ENCODE measurements at regions of chr17 and their contacts with region 1.

Region 1: GRCh38 chr17:61412143-61412859 is 12.7 kb downstream of the TBX2 start:
- DNase-seq: peak; percentile 72
- H3K4me3 Mint-ChIP-seq: peak overlapping the region; percentile 71
- H3K27ac Mint-ChIP-seq: peak overlapping the region; percentile 19
- H3K4me1 Mint-ChIP-seq: no peaks in the 10 kb centered on the region
- H3K27me3 Mint-ChIP-seq: no peaks in the 10 kb centered on the region
- CTCF ChIP-seq: peak; percentile 99

Region 2: GRCh38 chr17:61002316-61002736 is 410.0 kb before region 1 on chr17:
- CTCF ChIA-PET with region 1: interaction called, 5 read pairs
- POLR2A ChIA-PET with region 1: no interaction called
- intact Hi-C with region 1: loop called (anchors 1 kb)
- DNase-seq: peak; percentile 51
- H3K4me3 Mint-ChIP-seq: no peak overlapping the region
- H3K27ac Mint-ChIP-seq: no peak overlapping the region
- H3K4me1 Mint-ChIP-seq: no peaks in the 10 kb centered on the region
- H3K27me3 Mint-ChIP-seq: no peaks in the 10 kb centered on the region
- CTCF ChIP-seq: peak; percentile 56

Region 3: DNA sequence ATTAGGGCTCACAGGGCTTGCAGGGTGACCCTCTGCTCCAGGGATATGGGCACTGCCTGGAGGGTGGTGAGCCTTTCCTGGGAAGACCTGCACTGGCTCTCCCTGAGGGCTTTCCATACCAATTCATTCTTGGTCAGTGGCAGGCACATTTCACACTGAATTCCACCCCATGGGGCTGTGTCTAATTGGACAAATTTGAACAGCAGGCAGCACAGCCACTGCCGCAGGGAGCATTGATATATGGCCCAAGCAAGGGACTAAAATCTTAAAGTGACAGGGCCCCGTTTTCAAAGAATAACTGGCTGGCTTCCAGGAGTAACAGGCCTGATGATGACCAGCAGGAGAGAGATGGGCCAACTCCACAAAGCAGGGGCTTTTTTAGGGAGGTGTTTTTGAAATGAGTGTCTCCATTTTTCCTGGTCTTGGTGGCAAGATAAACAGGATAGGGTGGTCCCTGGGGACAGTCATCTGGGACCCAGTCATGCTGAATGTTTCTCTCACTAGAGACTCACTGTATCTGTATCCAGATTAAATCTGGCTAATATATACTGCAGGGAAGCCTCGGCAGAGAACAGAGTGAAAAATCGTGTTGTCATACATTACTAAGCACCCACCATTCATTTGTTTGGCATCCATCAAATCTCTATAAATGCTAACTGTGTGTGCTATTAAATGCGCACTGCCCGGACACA is 86.8 kb before region 1 on chr17:
- CTCF ChIA-PET with region 1: no interaction called
- POLR2A ChIA-PET with region 1: no interaction called
- intact Hi-C with region 1: no loop called
- DNase-seq: no peak
- H3K4me3 Mint-ChIP-seq: no peak overlapping the region
- H3K27ac Mint-ChIP-seq: no peak overlapping the region
- H3K4me1 Mint-ChIP-seq: no peaks in the 10 kb centered on the region
- H3K27me3 Mint-ChIP-seq: no peaks in the 10 kb centered on the region
- CTCF ChIP-seq: no peak

Region 4: DNA sequence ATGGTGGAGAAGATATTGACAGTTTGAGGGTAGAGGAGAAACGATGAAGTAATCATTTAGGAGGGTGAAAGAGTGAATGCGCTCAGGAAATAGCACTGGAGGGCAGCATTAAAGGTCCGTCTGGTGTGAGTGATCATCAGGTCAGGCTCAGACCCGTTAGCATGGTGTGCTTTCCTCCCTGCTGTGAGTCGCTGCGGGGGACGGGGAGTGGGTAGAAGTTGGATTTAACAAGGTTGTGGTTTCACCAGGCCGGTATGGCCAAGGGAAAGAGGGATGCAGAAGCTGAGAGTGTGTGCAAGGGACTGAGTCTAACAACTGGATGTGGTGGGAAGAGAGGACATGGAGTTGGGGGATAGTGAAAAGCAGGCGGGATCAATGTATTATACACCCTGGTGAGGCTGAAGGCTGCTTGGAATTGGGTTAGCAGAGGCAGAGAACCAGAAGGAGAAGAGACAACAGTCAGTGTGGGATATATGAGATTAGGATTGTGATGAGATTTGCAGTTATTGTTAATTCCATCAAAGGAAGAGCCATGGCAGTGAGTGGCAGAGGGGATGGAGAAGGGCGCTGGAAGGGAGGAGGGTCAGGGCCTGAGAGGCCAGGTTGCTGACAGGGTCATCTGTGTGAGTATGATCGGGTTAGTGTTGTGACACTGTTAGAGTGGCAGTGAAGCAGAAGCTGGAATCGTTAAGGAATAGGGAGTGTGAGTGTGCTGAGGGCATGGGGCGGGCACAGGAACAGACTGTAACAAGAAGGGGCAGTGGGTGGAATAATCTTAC is 71.7 kb before region 1 on chr17:
- CTCF ChIA-PET with region 1: no interaction called
- POLR2A ChIA-PET with region 1: no interaction called
- intact Hi-C with region 1: no loop called
- DNase-seq: no peak
- H3K4me3 Mint-ChIP-seq: no peak overlapping the region
- H3K27ac Mint-ChIP-seq: no peak overlapping the region
- H3K4me1 Mint-ChIP-seq: peaks cover 21% of the 10 kb centered on the region
- H3K27me3 Mint-ChIP-seq: no peaks in the 10 kb centered on the region
- CTCF ChIP-seq: no peak

Region 5: GRCh38 chr17:61551255-61551742 is 139.0 kb after region 1 on chr17:
- CTCF ChIA-PET with region 1: interaction called, 57 read pairs
- POLR2A ChIA-PET with region 1: no interaction called
- intact Hi-C with region 1: loop called (anchors 1 kb)
- DNase-seq: peak; percentile 54
- H3K4me3 Mint-ChIP-seq: no peak overlapping the region
- H3K27ac Mint-ChIP-seq: no peak overlapping the region
- H3K4me1 Mint-ChIP-seq: no peaks in the 10 kb centered on the region
- H3K27me3 Mint-ChIP-seq: peaks cover 42% of the 10 kb centered on the region
- CTCF ChIP-seq: peak; percentile 66

Region 6: GRCh38 chr17:61583242-61583641 is 170.9 kb after region 1 on chr17:
- CTCF ChIA-PET with region 1: interaction called, 10 read pairs
- POLR2A ChIA-PET with region 1: no interaction called
- intact Hi-C with region 1: loop called (anchors 1 kb)
- DNase-seq: peak; percentile 60
- H3K4me3 Mint-ChIP-seq: no peak overlapping the region
- H3K27ac Mint-ChIP-seq: no peak overlapping the region
- H3K4me1 Mint-ChIP-seq: no peaks in the 10 kb centered on the region
- H3K27me3 Mint-ChIP-seq: no peaks in the 10 kb centered on the region
- CTCF ChIP-seq: no peak

Region 7: GRCh38 chr17:61837175-61838051 is 425.1 kb after region 1 on chr17:
- CTCF ChIA-PET with region 1: interaction called, 24 read pairs
- POLR2A ChIA-PET with region 1: interaction called, 4 read pairs
- intact Hi-C with region 1: loop called (anchors 1 kb)
- DNase-seq: peak; percentile 82
- H3K4me3 Mint-ChIP-seq: no peak overlapping the region
- H3K27ac Mint-ChIP-seq: no peak overlapping the region
- H3K4me1 Mint-ChIP-seq: no peaks in the 10 kb centered on the region
- H3K27me3 Mint-ChIP-seq: no peaks in the 10 kb centered on the region
- CTCF ChIP-seq: peak; percentile 75